ENCODE measurements at regions of chr5 and their contacts with region 1.

Region 1: GRCh38 chr5:140157032-140157803 is 17.8 kb upstream of the CYSTM1 start:
- DNase-seq: peak; percentile 75
- ATAC-seq: peak; percentile 100
- H3K4me3 Mint-ChIP-seq: peak overlapping the region; percentile 66
- H3K27ac Mint-ChIP-seq: no peak overlapping the region
- H3K4me1 Mint-ChIP-seq: peaks cover 10% of the 10 kb centered on the region
- H3K27me3 Mint-ChIP-seq: no peaks in the 10 kb centered on the region
- CTCF ChIP-seq: no peak

Region 2: DNA sequence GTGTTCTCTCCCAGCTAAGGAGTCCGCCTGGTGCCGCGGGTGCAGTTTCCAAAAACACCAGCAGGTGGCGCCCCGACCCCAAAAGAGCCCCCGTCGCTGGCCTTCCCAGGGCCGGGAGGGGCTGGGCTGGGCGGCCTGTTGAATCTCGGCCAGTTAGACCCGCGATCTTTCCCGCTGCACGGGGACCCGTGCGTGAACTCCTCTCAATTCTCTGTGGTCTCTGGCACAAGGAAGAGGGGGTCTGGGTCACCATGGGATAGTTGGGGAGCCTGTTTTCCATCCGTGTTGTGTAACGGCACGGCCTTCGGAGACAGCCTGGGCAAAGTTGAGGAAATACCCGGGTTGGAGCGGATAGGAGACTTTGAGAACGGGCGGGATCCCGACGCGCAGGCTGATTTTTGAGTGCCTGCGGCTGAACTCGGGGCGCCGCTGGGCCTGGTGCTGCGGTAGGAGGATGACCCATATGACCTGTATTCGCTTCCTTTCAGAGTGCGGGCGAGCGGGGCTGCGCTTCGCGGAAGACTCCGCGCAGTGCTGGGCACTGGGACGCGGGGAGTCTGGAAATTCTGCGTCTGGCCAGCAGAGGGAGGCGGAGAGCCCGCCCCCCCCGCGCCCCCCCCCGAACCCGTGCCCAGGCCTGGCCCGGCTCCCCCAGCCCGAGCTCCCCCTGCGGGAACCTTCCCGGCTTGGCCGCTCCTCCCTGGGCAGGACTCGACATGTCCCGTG is 369.5 kb before region 1 on chr5:
- CTCF ChIA-PET with region 1: interaction called, 3 read pairs
- POLR2A ChIA-PET with region 1: no interaction called
- intact Hi-C with region 1: loop called (anchors 1 kb)
- DNase-seq: peak; percentile 92
- ATAC-seq: peak; percentile 93
- H3K4me3 Mint-ChIP-seq: peak overlapping the region; percentile 88
- H3K27ac Mint-ChIP-seq: no peak overlapping the region
- H3K4me1 Mint-ChIP-seq: peaks cover 11% of the 10 kb centered on the region
- H3K27me3 Mint-ChIP-seq: peaks cover 19% of the 10 kb centered on the region
- CTCF ChIP-seq: no peak

Region 3: GRCh38 chr5:140073296-140073695 is 83.9 kb before region 1 on chr5:
- CTCF ChIA-PET with region 1: interaction called, 65 read pairs
- POLR2A ChIA-PET with region 1: no interaction called
- intact Hi-C with region 1: loop called (anchors 1 kb)
- DNase-seq: no peak
- ATAC-seq: no peak
- H3K4me3 Mint-ChIP-seq: no peak overlapping the region
- H3K27ac Mint-ChIP-seq: no peak overlapping the region
- H3K4me1 Mint-ChIP-seq: no peaks in the 10 kb centered on the region
- H3K27me3 Mint-ChIP-seq: peaks cover 17% of the 10 kb centered on the region
- CTCF ChIP-seq: peak; percentile 87

Region 4: GRCh38 chr5:140107312-140108083 is 49.7 kb before region 1 on chr5:
- CTCF ChIA-PET with region 1: no interaction called
- POLR2A ChIA-PET with region 1: interaction called, 3 read pairs
- intact Hi-C with region 1: loop called (anchors 1 kb)
- DNase-seq: peak; percentile 92
- ATAC-seq: peak; percentile 89
- H3K4me3 Mint-ChIP-seq: peak overlapping the region; percentile 98
- H3K27ac Mint-ChIP-seq: peak overlapping the region; percentile 97
- H3K4me1 Mint-ChIP-seq: peaks cover 44% of the 10 kb centered on the region
- H3K27me3 Mint-ChIP-seq: peaks cover 15% of the 10 kb centered on the region
- CTCF ChIP-seq: no peak

Region 5: DNA sequence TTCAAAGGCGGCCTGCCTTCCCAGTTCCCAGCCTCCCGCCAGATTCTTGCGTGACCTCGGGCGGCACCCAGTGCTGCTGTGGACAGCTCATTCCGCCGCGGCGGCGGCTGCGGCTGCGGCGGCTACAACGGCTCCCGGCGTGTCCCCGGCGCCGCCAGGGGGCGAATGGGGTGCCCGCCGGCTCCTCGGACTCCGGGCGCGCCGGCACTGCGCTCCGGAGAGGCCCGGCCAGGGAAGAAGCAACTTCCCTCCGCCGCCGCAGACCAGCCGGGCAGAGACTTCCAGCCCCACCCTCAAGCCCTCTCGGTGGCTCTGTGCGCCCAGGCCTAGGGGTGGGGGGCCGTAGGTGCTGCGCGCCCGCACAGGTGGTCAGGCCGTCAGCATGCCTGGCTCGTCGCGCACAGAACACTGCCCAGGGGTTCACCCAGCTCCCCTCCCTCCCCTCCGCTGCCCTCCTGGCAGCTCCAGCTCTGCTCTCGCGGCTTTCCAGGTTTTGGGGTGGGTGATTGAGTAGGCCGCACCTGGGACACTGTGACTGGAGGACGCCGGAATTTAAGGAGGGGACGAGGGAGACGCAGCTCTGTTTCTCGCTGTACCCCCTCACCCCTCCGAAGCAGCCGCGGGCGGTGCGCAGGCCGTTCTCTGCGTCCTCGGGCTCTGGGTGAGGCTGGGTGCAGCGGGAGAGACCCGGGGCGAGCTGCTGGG is 11.2 kb before region 1 on chr5:
- CTCF ChIA-PET with region 1: interaction called, 8 read pairs
- POLR2A ChIA-PET with region 1: no interaction called
- intact Hi-C with region 1: loop called (anchors 1 kb)
- DNase-seq: peak; percentile 62
- ATAC-seq: peak; percentile 77
- H3K4me3 Mint-ChIP-seq: peak overlapping the region; percentile 52
- H3K27ac Mint-ChIP-seq: no peak overlapping the region
- H3K4me1 Mint-ChIP-seq: peaks cover 26% of the 10 kb centered on the region
- H3K27me3 Mint-ChIP-seq: peaks cover 21% of the 10 kb centered on the region
- CTCF ChIP-seq: peak; percentile 28

Region 6: DNA sequence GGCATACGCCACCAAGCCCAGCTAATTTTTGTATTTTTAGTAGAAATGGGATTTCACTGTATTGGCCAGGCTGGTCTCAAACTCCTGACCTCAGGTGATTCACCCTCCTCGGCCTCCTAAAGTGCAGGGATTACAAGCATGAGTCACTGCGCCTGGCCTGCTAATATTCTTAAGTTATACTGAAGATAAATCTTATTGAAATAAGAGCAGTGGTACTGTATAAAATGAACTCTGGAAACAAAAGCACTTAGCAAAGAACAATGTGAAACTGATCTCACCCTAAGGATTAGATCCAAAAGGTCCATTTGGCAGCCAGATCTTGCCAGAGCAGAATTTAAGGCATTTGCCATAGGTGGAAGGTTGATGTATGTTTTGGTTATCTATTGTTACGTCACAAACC is 44.9 kb after region 1 on chr5:
- CTCF ChIA-PET with region 1: no interaction called
- POLR2A ChIA-PET with region 1: no interaction called
- intact Hi-C with region 1: no loop called
- DNase-seq: no peak
- ATAC-seq: no peak
- H3K4me3 Mint-ChIP-seq: no peak overlapping the region
- H3K27ac Mint-ChIP-seq: no peak overlapping the region
- H3K4me1 Mint-ChIP-seq: no peaks in the 10 kb centered on the region
- H3K27me3 Mint-ChIP-seq: no peaks in the 10 kb centered on the region
- CTCF ChIP-seq: no peak